HepG2 (cell line): ENCODE measurements at regions of chr7 and their contacts with region 1.

Region 1: GRCh38 chr7:39623018-39623731 is at the start of gene RALA:
- DNase-seq: peak; percentile 84
- ATAC-seq: peak; percentile 98
- H3K4me3 ChIP-seq: peak within 1 kb of the TSS; percentile 79 to 87 (median 86)
- H3K27ac ChIP-seq: peak within 1 kb of the TSS; percentile 94
- H3K4me1 ChIP-seq: peaks cover 49% of the 10 kb centered on the region
- H3K27me3 ChIP-seq: no peaks in the 10 kb centered on the region
- CTCF ChIP-seq: no peak
- EP300 ChIP-seq: no peak
- POLR2A ChIP-seq: peak; percentile 89 to 91
- RAD21 ChIP-seq: 0 out of 2 replicates have a peak, but pooled peaks have one; percentile 31
- total RNA-seq, gene RALA: 11.8 and 23.0 TPM in 2 replicates

Region 2: GRCh38 chr7:39566023-39566921 is 56.9 kb before region 1 on chr7 and contains the start of gene YAE1:
- CTCF ChIA-PET with region 1: no interaction called
- POLR2A ChIA-PET with region 1: interaction called, 4 read pairs
- in situ Hi-C with region 1: no loop called
- intact Hi-C with region 1: loop called (anchors 2 kb)
- DNase-seq: peak; percentile 64
- ATAC-seq: peak; percentile 98
- H3K4me3 ChIP-seq: peak within 1 kb of the TSS; percentile 70 to 92 (median 92)
- H3K27ac ChIP-seq: peak within 1 kb of the TSS; percentile 80
- H3K4me1 ChIP-seq: peaks cover 11% of the 10 kb centered on the region
- H3K27me3 ChIP-seq: no peaks in the 10 kb centered on the region; a peak in 1 of 5 replicates
- CTCF ChIP-seq: no peak; the same call in none of the 2 replicates
- EP300 ChIP-seq: no peak; a peak in 1 of 4 replicates
- POLR2A ChIP-seq: peak; percentile 84 to 94; a peak in 3 of 4 replicates
- RAD21 ChIP-seq: peak; percentile 27; the same call in 1 of the 2 replicates
- total RNA-seq, gene YAE1: 28.3 and 32.9 TPM in 2 replicates

Region 3: GRCh38 chr7:40996233-40996677 is 1373.1 kb after region 1 on chr7:
- CTCF ChIA-PET with region 1: no interaction called
- POLR2A ChIA-PET with region 1: no interaction called
- in situ Hi-C with region 1: no loop called
- intact Hi-C with region 1: loop called (anchors 5 kb)
- DNase-seq: no peak
- ATAC-seq: no peak
- H3K4me3 ChIP-seq: no peak overlapping the region
- H3K27ac ChIP-seq: no peak overlapping the region
- H3K4me1 ChIP-seq: no peaks in the 10 kb centered on the region
- H3K27me3 ChIP-seq: no peaks in the 10 kb centered on the region
- CTCF ChIP-seq: no peak
- EP300 ChIP-seq: no peak
- POLR2A ChIP-seq: no peak
- RAD21 ChIP-seq: no peak